Endothelial cell of umbilical vein (primary cell): ENCODE measurements at regions of chr1 and their contacts with region 1.

Region 1: DNA sequence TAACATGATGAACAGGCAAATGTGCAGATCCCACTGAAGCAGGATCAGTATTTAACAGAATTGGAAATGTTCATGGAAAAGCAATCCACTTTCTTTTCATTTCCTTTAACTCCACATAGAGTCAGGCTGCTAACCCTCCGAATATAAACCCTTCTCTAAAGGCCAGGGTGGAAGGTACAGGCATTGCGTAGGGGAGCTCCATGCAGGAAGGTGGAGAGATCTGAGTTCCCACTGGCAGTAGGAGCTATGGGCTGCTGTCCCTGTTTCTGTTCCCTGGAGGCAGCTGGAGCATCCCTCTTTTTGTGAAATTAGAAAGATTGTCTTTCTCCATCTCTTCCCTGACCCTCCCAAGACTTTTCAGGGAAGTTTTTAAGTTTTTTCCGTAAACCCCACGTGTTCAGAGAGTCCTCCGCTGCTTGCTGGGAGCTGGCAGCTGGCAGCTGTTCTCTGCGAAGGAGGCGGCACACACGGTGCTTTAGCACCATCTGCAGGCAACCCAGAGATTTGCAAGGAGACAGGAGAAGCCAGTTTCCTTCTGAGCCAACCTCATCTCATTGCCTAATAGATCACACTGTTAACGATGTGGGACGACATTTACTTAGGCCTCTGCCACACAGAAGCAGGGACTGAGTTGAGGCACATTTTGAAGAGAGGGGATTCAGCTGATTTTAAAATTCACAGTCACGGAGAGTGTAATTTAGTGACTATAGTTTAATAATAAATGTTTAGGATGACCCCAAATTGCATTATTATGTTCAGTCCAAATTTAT is 55.4 kb upstream of the HOOK1 start:
- DNase-seq: peak; percentile 85
- H3K4me3 ChIP-seq: no peak overlapping the region
- H3K27ac ChIP-seq: peak overlapping the region; percentile 44
- H3K4me1 ChIP-seq: peaks cover 5% of the 10 kb centered on the region
- H3K27me3 ChIP-seq: no peaks in the 10 kb centered on the region
- CTCF ChIP-seq: peak; percentile 86 to 92
- POLR2A ChIP-seq: no peak

Region 2: GRCh38 chr1:58739856-58740466 is 1019.4 kb before region 1 on chr1:
- CTCF ChIA-PET with region 1: interaction called, 22 read pairs
- POLR2A ChIA-PET with region 1: no interaction called
- dilution Hi-C with region 1: no loop called
- intact Hi-C with region 1: loop called (anchors 1 kb)
- DNase-seq: peak; percentile 73
- H3K4me3 ChIP-seq: no peak overlapping the region
- H3K27ac ChIP-seq: no peak overlapping the region
- H3K4me1 ChIP-seq: peaks cover 3% of the 10 kb centered on the region
- H3K27me3 ChIP-seq: no peaks in the 10 kb centered on the region
- CTCF ChIP-seq: peak; percentile 31 to 38
- POLR2A ChIP-seq: no peak

Region 3: DNA sequence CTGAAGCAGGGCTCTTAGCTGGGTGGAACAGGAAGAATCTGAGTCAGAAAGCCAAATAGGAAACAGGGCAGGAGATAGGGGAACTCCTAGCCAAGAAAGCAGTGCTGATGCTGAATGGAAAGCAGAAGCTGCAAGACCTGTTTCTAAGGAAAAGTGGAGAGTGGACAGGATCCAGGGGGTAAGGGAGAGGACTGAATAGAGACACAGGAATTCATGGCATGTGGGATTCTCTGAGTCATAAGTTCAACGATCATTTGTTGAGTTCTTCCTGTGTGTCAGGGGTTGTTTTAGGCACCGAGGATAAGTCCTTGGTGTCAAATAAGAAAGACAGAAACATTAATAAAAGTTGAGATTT is 616.2 kb before region 1 on chr1:
- CTCF ChIA-PET with region 1: interaction called, 5 read pairs
- POLR2A ChIA-PET with region 1: no interaction called
- dilution Hi-C with region 1: no loop called
- intact Hi-C with region 1: loop called (anchors 5 kb)
- DNase-seq: peak; percentile 91
- H3K4me3 ChIP-seq: no peak overlapping the region
- H3K27ac ChIP-seq: peak overlapping the region; percentile 82
- H3K4me1 ChIP-seq: peaks cover 43% of the 10 kb centered on the region
- H3K27me3 ChIP-seq: no peaks in the 10 kb centered on the region
- CTCF ChIP-seq: no peak
- POLR2A ChIP-seq: peak; percentile 45

Region 4: DNA sequence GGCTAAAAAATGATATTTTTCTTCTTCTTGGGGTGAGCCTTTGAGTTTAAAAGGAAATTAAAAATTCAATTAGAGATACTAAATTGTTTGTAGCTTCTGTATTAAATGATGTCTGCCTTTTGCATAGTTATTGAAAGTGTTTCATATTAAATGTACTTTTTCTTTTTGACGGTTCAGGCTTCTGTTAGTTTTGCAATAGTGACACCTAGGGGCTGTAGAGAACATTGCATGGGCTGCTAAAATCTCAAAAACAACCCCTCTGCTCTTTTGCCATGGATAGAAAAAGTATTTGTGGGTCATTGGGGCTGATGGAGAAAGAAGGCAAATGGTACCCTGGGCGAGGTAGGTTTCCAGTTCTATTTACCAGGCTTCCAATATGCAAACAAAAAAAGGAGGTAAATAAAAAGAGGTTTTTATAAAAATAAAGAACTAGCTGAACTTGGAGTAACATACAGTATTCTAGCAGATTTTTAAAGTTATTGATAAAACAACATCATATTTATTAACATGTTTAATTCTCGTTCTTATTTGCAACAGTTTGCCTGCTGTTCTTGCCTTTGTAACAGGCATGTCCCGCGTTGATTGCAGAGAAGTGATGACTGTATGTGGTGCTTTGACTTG is 60.0 kb before region 1 on chr1:
- CTCF ChIA-PET with region 1: interaction called, 29 read pairs
- POLR2A ChIA-PET with region 1: interaction called, 3 read pairs
- dilution Hi-C with region 1: no loop called
- intact Hi-C with region 1: loop called (anchors 1 kb)
- DNase-seq: peak; percentile 62
- H3K4me3 ChIP-seq: no peak overlapping the region
- H3K27ac ChIP-seq: no peak overlapping the region
- H3K4me1 ChIP-seq: peaks cover 4% of the 10 kb centered on the region
- H3K27me3 ChIP-seq: no peaks in the 10 kb centered on the region
- CTCF ChIP-seq: peak; percentile 72 to 78
- POLR2A ChIP-seq: no peak

Region 5: GRCh38 chr1:59730759-59731478 is 28.4 kb before region 1 on chr1:
- CTCF ChIA-PET with region 1: interaction called, 17 read pairs
- POLR2A ChIA-PET with region 1: no interaction called
- dilution Hi-C with region 1: no loop called
- intact Hi-C with region 1: no loop called
- DNase-seq: peak; percentile 93
- H3K4me3 ChIP-seq: no peak overlapping the region
- H3K27ac ChIP-seq: peak overlapping the region; percentile 79
- H3K4me1 ChIP-seq: peaks cover 15% of the 10 kb centered on the region
- H3K27me3 ChIP-seq: no peaks in the 10 kb centered on the region
- CTCF ChIP-seq: no peak
- POLR2A ChIP-seq: peak; percentile 47